ENCODE measurements at regions of chr13 and their contacts with region 1.

Region 1: GRCh38 chr13:29849731-29850223 is 640 bp downstream of the UBL3 start:
- DNase-seq: no peak
- H3K4me3 ChIP-seq: peak overlapping the region; percentile 91
- CTCF ChIP-seq: no peak

Region 2: DNA sequence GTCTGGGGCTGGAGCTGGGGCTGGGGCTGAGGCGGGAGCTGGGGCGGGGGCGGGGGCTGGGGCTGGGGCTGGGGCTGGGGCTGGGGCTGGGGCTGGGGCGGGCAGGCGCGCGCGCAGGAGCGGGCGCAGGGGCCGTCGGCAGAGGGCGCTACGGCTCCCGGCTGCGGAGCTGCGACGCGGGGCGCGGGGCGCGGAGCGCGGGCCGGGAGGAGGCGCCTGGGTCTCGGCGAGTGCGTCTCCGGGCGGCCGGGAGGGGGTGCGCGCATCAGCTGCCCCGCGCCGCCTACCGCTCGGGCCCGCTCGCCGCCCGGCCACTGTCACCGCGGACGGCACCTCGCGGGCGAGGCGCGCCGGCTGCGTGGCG is 1030.1 kb before region 1 on chr13:
- in situ Hi-C with region 1: no loop called
- DNase-seq: no peak
- H3K4me3 ChIP-seq: peak overlapping the region; percentile 28
- CTCF ChIP-seq: no peak

Region 3: GRCh38 chr13:29782798-29783197 is 67.0 kb before region 1 on chr13:
- in situ Hi-C with region 1: loop called (anchors 5 kb)
- DNase-seq: no peak
- H3K4me3 ChIP-seq: no peak overlapping the region
- CTCF ChIP-seq: no peak

Region 4: DNA sequence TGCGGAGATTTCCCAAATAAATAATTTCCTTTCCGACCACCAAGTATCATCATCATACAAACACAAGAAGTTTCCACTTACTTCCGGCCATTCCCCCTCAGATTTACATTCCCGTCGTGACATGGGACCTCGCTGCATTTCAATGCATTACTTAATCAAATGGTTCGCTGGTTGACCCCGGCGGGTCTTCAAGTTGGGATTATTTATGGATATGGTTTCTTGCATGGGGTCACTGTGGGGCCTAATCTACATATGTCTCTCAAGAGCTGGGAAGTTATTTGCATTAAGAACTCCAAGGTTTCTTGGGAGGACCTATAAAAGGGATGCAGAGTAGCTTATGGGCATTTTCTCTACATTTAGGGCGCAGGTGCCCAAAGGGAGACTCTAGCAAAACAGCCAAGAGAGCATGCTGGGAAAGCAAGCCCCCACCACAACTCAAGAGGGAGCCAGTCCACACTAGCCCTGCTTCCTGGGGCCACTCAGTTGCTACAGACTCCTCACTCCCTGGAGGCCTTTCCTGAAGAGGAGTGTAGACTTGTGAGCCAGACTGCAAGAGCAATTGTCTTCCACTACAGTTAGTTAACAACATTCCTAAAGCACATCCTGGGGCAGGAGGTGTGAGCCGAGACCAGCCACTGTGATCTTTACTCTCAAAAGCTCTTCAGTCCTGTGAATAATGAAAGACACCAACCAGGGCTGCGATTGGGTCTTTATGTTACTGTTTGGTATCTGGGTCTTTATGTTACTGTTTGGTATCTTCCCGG is 332.3 kb after region 1 on chr13:
- in situ Hi-C with region 1: no loop called
- DNase-seq: no peak
- H3K4me3 ChIP-seq: no peak overlapping the region
- CTCF ChIP-seq: no peak

Region 5: DNA sequence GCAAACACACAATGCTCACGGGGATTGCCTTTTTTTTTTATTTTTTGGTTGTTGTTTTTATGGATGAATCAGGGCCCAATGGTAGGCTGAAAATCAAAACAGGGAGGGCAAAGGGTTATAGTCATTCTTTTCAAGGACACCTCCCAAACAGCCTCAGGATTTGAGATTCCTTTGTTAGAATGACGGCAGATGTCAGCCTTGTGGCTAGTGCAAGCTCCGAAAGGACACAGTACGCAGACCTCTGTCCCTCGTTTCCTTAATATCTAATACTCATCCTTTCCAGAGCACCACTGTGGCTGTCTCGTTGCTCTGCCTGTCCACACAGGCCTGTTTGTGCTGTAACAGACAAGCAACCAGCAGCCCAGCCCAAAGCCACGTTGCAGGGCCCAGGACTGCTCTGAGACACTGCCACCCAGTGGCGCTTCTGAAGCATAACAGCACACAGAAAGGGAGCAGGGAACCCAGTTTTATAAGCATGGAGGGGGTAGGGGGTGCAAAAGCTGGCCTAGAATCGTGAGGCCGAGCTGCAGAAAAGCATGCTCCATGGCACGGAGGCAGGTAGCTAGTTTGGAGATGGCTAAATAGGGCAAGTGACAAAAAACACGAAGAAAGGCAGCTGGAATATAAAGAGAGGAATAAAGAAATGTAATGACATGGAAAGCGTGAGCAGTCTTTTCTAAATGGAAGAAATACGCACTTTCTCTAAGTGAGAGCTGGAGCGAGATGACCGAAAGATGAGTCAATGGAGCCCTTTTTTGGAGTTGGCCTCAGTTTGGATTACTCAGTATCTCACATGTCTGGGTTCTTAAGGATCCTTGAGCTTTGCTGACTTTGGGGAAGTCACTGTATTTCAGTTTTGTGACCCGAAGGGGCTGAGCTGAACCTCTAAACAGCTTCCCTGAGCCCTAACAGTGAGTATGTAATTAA is 1015.6 kb after region 1 on chr13:
- in situ Hi-C with region 1: no loop called
- DNase-seq: peak; percentile 88
- H3K4me3 ChIP-seq: no peak overlapping the region
- CTCF ChIP-seq: peak; percentile 95

Region 6: GRCh38 chr13:30915691-30916541 is 1066.1 kb after region 1 on chr13:
- in situ Hi-C with region 1: no loop called
- DNase-seq: no peak
- H3K4me3 ChIP-seq: no peak overlapping the region
- CTCF ChIP-seq: no peak